Heart left ventricle (tissue), 16 donors: ENCODE measurements at regions of chr7 and their contacts with region 1.

Region 1: GRCh38 chr7:27513885-27514284 is 148.8 kb downstream of the HIBADH start:
- DNase-seq: no peak
- ATAC-seq: no peak
- H3K4me3 ChIP-seq: no peak overlapping the region
- H3K27ac ChIP-seq: no peak overlapping the region
- H3K4me1 ChIP-seq: no peaks in the 10 kb centered on the region
- H3K27me3 ChIP-seq: no peaks in the 10 kb centered on the region
- CTCF ChIP-seq: no peak
- POLR2A ChIP-seq: no peak

Region 2: DNA sequence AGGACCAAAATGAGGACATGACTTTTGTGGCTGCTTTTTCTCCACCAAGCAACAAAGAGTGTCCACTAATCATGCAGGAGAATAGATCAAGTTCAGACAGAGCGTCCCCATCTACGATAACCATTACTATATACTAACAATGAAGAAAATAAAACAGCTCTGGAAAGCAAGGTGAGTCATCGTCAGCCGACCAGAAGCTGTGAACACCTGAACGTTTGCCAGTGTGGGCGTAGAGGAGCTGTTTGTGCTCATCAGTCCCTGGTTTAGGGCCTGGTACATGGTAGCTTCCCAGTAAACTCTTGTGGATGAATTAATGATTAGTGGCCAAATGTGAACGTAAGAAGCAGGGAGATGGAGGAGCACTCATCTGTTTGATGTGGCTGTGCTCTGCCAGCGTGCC is 90.6 kb before region 1 on chr7:
- intact Hi-C with region 1: no loop called
- DNase-seq: no peak
- ATAC-seq: no peak
- H3K4me3 ChIP-seq: no peak overlapping the region
- H3K27ac ChIP-seq: no peak overlapping the region
- H3K4me1 ChIP-seq: peaks cover 0 to 11% (median 0%) of the 10 kb centered on the region in 12 donors
- H3K27me3 ChIP-seq: peaks cover 0 to 5% (median 0%) of the 10 kb centered on the region in 9 donors
- CTCF ChIP-seq: no peak
- POLR2A ChIP-seq: no peak

Region 3: GRCh38 chr7:27459731-27460053 is 54.2 kb before region 1 on chr7:
- intact Hi-C with region 1: loop called in 1 of 10 experiments (anchors 2 kb)
- DNase-seq: no peak
- ATAC-seq: no peak
- H3K4me3 ChIP-seq: no peak overlapping the region
- H3K27ac ChIP-seq: no peak overlapping the region
- H3K4me1 ChIP-seq: peaks cover 0 to 4% (median 0%) of the 10 kb centered on the region in 12 donors
- H3K27me3 ChIP-seq: peaks cover 0 to 11% (median 0%) of the 10 kb centered on the region in 9 donors
- CTCF ChIP-seq: no peak
- POLR2A ChIP-seq: no peak

Region 4: DNA sequence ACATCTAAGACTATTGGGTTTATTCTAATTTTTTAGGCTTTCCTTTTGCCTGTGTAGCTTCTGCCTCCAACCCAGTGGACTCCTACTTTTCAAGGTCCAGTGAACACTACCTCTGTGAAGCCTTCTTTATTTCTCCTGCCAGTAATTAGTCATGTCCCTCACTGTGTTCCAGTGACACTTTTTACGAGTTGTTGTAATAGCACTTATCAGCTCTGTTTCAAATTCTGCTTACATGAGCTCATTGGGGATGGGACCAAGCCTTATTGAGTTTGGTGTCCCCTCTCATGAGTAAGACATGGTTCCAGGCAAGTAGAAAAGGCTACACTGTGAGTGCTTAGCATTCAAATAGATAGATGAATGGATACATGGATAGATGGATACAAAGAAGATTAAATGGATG is 35.8 kb before region 1 on chr7:
- intact Hi-C with region 1: no loop called
- DNase-seq: no peak
- ATAC-seq: no peak
- H3K4me3 ChIP-seq: no peak overlapping the region
- H3K27ac ChIP-seq: no peak overlapping the region
- H3K4me1 ChIP-seq: no peaks in the 10 kb centered on the region
- H3K27me3 ChIP-seq: no peaks in the 10 kb centered on the region
- CTCF ChIP-seq: no peak
- POLR2A ChIP-seq: no peak